ENCODE measurements at regions of chr10 and their contacts with region 1.

Region 1: DNA sequence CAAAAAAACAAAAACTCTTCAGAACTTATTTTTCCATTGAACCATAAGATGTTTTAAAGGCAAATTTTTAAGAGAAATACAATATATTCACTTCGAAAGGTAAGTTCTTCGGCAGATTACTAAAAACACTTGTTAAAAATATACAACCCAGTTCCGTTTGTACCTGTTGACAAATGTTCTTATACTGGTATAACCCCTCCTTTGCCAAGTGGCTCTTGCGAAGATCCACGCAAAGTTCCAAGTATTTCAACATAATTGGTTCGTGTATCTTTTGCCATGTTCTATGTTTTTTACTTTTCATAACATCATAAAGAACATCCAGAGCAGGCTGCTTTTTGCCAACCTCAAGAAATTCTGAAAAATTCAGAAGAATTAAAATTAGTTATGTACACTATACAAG is 7.0 kb downstream of the EIF3A start:
- DNase-seq: no peak
- ATAC-seq: no peak
- H3K4me3 ChIP-seq: no peak overlapping the region
- H3K4me3 Mint-ChIP-seq: peak overlapping the region; percentile 8
- H3K27ac ChIP-seq: no peak overlapping the region
- H3K27ac Mint-ChIP-seq: peak overlapping the region; percentile 32
- H3K4me1 ChIP-seq: peaks cover 29% of the 10 kb centered on the region
- H3K4me1 Mint-ChIP-seq: peaks cover 54% of the 10 kb centered on the region
- H3K27me3 ChIP-seq: no peaks in the 10 kb centered on the region
- H3K27me3 Mint-ChIP-seq: no peaks in the 10 kb centered on the region
- CTCF ChIP-seq: no peak

Region 2: DNA sequence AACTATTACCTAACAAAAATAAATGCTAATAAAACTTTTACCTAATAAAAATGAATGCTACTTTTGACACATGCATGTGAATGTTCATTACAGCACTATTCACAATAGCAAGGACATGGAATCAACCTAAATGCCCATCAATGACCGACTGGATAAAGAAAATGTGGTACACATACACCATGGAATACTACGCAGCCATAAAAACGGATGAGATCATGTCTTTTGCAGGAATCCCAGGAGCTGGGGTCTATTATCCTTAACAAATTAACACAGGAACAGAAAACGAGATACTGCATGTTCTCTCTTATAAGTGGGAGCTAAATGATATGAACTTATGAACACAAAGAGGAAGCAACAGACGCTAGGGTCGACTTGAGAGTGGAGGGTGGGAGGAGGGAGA is 643.4 kb before region 1 on chr10:
- CTCF ChIA-PET with region 1: no interaction called
- POLR2A ChIA-PET with region 1: no interaction called
- intact Hi-C with region 1: no loop called
- DNase-seq: no peak
- ATAC-seq: no peak
- H3K4me3 ChIP-seq: no peak overlapping the region
- H3K4me3 Mint-ChIP-seq: no peak overlapping the region
- H3K27ac ChIP-seq: no peak overlapping the region
- H3K27ac Mint-ChIP-seq: no peak overlapping the region
- H3K4me1 ChIP-seq: no peaks in the 10 kb centered on the region
- H3K4me1 Mint-ChIP-seq: no peaks in the 10 kb centered on the region
- H3K27me3 ChIP-seq: no peaks in the 10 kb centered on the region
- H3K27me3 Mint-ChIP-seq: peaks cover 18% of the 10 kb centered on the region
- CTCF ChIP-seq: no peak

Region 3: DNA sequence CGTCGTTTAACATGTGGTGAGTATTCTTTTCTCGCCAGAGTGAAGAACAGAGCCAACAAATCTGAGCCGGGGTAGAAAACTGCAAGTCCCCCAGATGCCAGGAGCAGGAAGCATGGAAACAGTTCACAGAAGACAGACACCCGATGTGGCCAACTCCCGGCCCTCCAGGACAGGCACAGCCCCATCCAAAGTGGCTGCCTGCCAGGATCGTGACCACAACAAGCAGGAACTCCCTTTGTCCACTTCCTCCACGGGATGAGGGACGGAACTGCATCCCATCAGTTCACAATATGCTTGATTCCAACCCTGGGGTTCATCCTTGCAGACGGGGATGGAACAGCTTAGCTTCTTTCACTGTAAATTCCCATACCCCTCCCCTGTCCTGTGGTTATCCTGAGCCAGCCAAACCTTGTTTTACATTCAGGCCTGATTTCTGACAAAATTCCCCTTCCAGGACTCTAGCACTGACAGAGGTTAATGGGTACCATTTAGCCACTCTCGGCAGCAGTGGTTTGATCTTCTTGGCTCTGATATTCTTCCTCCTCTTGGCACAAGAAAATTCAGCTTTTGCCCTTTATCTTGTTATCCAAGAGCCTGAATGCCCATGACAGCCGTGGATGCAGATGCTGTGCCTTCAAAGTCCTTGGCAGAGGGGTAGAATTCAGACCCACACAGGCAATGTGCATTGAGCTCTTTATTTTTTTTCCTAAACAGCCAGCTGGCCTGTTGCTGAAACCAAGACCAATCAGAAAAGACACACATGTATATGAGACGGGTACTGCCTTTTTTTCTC is 625.9 kb before region 1 on chr10:
- CTCF ChIA-PET with region 1: no interaction called
- POLR2A ChIA-PET with region 1: no interaction called
- intact Hi-C with region 1: no loop called
- DNase-seq: no peak
- ATAC-seq: no peak
- H3K4me3 ChIP-seq: no peak overlapping the region
- H3K4me3 Mint-ChIP-seq: no peak overlapping the region
- H3K27ac ChIP-seq: no peak overlapping the region
- H3K27ac Mint-ChIP-seq: no peak overlapping the region
- H3K4me1 ChIP-seq: no peaks in the 10 kb centered on the region
- H3K4me1 Mint-ChIP-seq: no peaks in the 10 kb centered on the region
- H3K27me3 ChIP-seq: no peaks in the 10 kb centered on the region
- H3K27me3 Mint-ChIP-seq: peaks cover 36% of the 10 kb centered on the region
- CTCF ChIP-seq: no peak

Region 4: GRCh38 chr10:119056771-119057170 is 16.8 kb before region 1 on chr10:
- CTCF ChIA-PET with region 1: no interaction called
- POLR2A ChIA-PET with region 1: interaction called, 3 read pairs
- intact Hi-C with region 1: loop called in 1 of 2 experiments (anchors 1 kb)
- DNase-seq: no peak
- ATAC-seq: no peak
- H3K4me3 ChIP-seq: no peak overlapping the region
- H3K4me3 Mint-ChIP-seq: no peak overlapping the region
- H3K27ac ChIP-seq: no peak overlapping the region
- H3K27ac Mint-ChIP-seq: no peak overlapping the region
- H3K4me1 ChIP-seq: no peaks in the 10 kb centered on the region
- H3K4me1 Mint-ChIP-seq: peaks cover 14% of the 10 kb centered on the region
- H3K27me3 ChIP-seq: no peaks in the 10 kb centered on the region
- H3K27me3 Mint-ChIP-seq: no peaks in the 10 kb centered on the region
- CTCF ChIP-seq: no peak

Region 5: GRCh38 chr10:119103903-119104652 is 30.5 kb after region 1 on chr10 and contains the start of gene DENND10:
- CTCF ChIA-PET with region 1: no interaction called
- POLR2A ChIA-PET with region 1: interaction called, 5 read pairs
- intact Hi-C with region 1: loop called in 1 of 2 experiments (anchors 5 kb)
- DNase-seq: peak; percentile 55 to 88 (median 78)
- ATAC-seq: peak; percentile 85
- H3K4me3 ChIP-seq: peak within 1 kb of the TSS; percentile 46 to 49
- H3K4me3 Mint-ChIP-seq: peak within 1 kb of the TSS; percentile 90
- H3K27ac ChIP-seq: peak within 1 kb of the TSS; percentile 37 to 59
- H3K27ac Mint-ChIP-seq: peak within 1 kb of the TSS; percentile 93
- H3K4me1 ChIP-seq: peaks cover 4% of the 10 kb centered on the region
- H3K4me1 Mint-ChIP-seq: peaks cover 20% of the 10 kb centered on the region
- H3K27me3 ChIP-seq: no peaks in the 10 kb centered on the region
- H3K27me3 Mint-ChIP-seq: no peaks in the 10 kb centered on the region
- CTCF ChIP-seq: no peak
- total RNA-seq, gene DENND10: 28.8 to 30.5 TPM

Measured in CD8-positive, alpha-beta T cell (primary cell).